Activated CD4-positive, alpha-beta T cell treated with anti-CD3 and anti-CD28 coated beads for 36 hours (primary cell): ENCODE measurements at regions of chr3 and their contacts with region 1.

Region 1: GRCh38 chr3:150763122-150763841 is at the start of gene SIAH2:
- DNase-seq: peak; percentile 96
- ATAC-seq: peak; percentile 72
- H3K4me3 Mint-ChIP-seq: peak within 1 kb of the TSS; percentile 85
- H3K27ac Mint-ChIP-seq: peak within 1 kb of the TSS; percentile 98
- H3K4me1 Mint-ChIP-seq: peaks cover 51% of the 10 kb centered on the region
- H3K27me3 Mint-ChIP-seq: no peaks in the 10 kb centered on the region
- total RNA-seq, gene SIAH2: 85.7 to 154 TPM

Region 2: GRCh38 chr3:149801639-149802038 is 961.6 kb before region 1 on chr3:
- CTCF ChIA-PET with region 1: no interaction called
- POLR2A ChIA-PET with region 1: no interaction called
- intact Hi-C with region 1: no loop called
- DNase-seq: no peak
- ATAC-seq: no peak
- H3K4me3 Mint-ChIP-seq: no peak overlapping the region
- H3K27ac Mint-ChIP-seq: no peak overlapping the region
- H3K4me1 Mint-ChIP-seq: no peaks in the 10 kb centered on the region
- H3K27me3 Mint-ChIP-seq: peaks cover 18% of the 10 kb centered on the region

Region 3: GRCh38 chr3:149812606-149813366 is 950.5 kb before region 1 on chr3 and contains the start of gene RNF13:
- CTCF ChIA-PET with region 1: no interaction called
- POLR2A ChIA-PET with region 1: no interaction called
- intact Hi-C with region 1: loop called in 1 of 2 experiments (anchors 2 kb)
- DNase-seq: peak; percentile 96
- ATAC-seq: peak; percentile 95
- H3K4me3 Mint-ChIP-seq: peak within 1 kb of the TSS; percentile 95
- H3K27ac Mint-ChIP-seq: peak within 1 kb of the TSS; percentile 100
- H3K4me1 Mint-ChIP-seq: peaks cover 46% of the 10 kb centered on the region
- H3K27me3 Mint-ChIP-seq: peaks cover 3% of the 10 kb centered on the region
- total RNA-seq, gene RNF13: 28.8 to 41.2 TPM

Region 4: DNA sequence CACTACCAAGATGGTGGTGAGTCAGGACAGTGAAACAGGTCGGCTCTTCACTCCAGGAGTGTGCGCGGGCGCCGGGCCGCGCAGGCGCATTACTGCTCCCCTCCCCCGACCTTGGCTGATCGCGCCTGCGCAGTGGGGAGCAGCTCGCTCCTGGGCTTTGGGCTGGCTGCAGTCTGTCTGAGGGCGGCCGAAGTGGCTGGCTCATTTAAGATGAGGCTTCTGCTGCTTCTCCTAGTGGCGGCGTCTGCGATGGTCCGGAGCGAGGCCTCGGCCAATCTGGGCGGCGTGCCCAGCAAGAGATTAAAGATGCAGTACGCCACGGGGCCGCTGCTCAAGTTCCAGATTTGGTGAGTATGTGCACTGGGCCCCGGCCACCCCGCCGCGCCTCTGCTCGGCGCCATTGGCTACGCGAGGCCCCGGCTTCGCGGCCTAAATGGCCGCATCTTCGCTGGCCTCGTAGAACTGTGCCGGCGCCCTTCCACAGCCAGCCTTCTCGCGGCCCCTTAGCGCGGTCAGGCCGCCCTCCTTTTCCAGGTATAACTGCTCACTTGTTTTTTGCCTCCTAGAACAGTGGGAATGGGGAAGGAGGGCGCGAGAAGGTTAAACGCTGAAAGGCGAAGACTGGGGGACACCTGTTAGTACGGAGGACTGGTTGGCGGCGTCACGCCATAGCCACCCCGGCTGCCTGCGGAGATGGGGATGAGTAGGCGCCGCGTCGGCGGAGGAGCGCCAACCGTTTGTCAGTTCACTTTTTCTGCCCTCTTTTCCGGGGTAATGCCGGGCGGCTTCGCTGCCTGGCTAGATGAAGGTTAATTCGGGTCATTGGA is 159.9 kb before region 1 on chr3 and contains the start of gene SELENOT:
- CTCF ChIA-PET with region 1: no interaction called
- POLR2A ChIA-PET with region 1: interaction called, 4 read pairs
- intact Hi-C with region 1: loop called (anchors 1 to 2 kb)
- DNase-seq: peak; percentile 96
- ATAC-seq: peak; percentile 91
- H3K4me3 Mint-ChIP-seq: peak within 1 kb of the TSS; percentile 97
- H3K27ac Mint-ChIP-seq: peak within 1 kb of the TSS; percentile 98
- H3K4me1 Mint-ChIP-seq: peaks cover 68% of the 10 kb centered on the region
- H3K27me3 Mint-ChIP-seq: no peaks in the 10 kb centered on the region
- total RNA-seq, gene SELENOT: 88.6 to 134 TPM

Region 5: DNA sequence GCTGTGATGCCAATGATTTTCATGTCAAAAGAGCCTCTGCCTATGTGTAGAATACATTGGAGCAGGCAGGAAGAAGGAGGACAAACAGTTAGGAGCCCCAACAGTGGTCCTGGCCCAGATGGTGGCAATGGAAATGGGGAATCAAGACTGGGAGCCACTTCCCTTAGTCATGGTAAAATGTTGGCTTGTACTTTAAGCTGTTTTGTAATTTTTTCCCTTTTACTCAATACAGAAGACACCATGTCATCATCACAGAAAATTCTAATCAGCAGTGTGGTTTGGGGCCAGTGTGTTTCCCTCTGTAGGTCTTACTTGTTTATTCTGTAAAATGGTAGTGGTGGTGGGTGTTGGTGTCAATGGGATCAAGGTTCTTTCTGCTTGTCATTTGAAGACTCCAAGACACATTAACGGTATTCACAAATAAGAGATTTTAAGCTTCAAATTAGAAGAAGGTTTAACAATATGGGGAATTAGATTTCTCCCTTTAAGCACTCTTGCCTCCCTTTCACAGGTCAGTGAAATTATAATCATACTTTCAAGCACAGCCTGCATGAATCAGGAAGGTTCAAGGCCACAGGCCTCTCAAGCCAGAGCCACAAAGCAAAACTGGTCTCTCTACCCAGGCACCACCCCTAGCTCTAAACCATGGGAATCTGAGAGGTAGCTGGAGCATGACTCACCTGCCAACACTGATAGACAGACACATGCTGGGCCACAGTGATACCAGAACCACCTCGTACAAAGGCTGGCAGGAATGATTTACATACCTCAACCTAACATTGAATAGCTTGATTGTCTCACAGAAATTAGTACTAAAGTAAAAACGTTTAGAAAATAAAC is 25.2 kb before region 1 on chr3:
- CTCF ChIA-PET with region 1: interaction called, 20 read pairs
- POLR2A ChIA-PET with region 1: interaction called, 73 read pairs
- intact Hi-C with region 1: loop called (anchors 1 kb)
- DNase-seq: peak; percentile 77
- ATAC-seq: peak; percentile 73
- H3K4me3 Mint-ChIP-seq: peak overlapping the region; percentile 40
- H3K27ac Mint-ChIP-seq: peak overlapping the region; percentile 93
- H3K4me1 Mint-ChIP-seq: peaks cover 72% of the 10 kb centered on the region
- H3K27me3 Mint-ChIP-seq: no peaks in the 10 kb centered on the region

Region 6: GRCh38 chr3:150787741-150788370 is 24.6 kb after region 1 on chr3:
- CTCF ChIA-PET with region 1: interaction called, 23 read pairs
- POLR2A ChIA-PET with region 1: interaction called, 30 read pairs
- intact Hi-C with region 1: loop called (anchors 1 kb)
- DNase-seq: peak; percentile 94
- ATAC-seq: peak; percentile 50
- H3K4me3 Mint-ChIP-seq: peak overlapping the region; percentile 23
- H3K27ac Mint-ChIP-seq: peak overlapping the region; percentile 55
- H3K4me1 Mint-ChIP-seq: peaks cover 47% of the 10 kb centered on the region
- H3K27me3 Mint-ChIP-seq: peaks cover 10% of the 10 kb centered on the region

Region 7: DNA sequence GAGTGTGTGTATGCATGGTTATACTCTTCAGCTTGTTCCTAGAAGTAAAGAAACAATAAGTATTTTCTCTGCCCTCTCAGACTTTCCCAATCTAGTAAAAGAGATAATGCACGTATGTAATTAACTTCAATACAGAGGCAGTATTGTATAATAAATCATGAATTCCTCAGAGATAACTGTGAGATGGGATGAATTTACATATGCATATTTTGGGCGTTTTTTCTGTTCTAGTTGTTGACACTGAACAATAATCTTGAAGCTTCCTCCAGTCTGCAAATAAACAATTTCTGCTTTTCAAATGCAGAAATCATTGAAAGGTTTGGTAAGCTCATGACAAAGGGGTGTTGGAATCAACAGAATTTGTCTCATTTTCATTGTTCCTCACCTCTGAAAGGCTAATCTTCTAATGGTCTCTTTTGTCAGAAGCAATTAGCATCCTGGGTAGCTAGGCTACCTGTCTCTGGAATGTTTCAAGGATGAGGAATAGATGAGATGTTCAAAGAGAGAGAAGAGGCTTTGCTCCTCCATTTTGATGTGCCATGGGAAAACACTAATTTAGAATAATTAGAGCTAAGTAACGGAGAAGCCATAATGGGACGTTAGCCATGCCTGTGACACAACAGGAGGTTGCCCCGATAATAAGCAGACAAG is 43.0 kb after region 1 on chr3:
- CTCF ChIA-PET with region 1: no interaction called
- POLR2A ChIA-PET with region 1: no interaction called
- intact Hi-C with region 1: no loop called
- DNase-seq: no peak
- ATAC-seq: no peak
- H3K4me3 Mint-ChIP-seq: no peak overlapping the region
- H3K27ac Mint-ChIP-seq: no peak overlapping the region
- H3K4me1 Mint-ChIP-seq: no peaks in the 10 kb centered on the region
- H3K27me3 Mint-ChIP-seq: peaks cover 7% of the 10 kb centered on the region

Region 8: DNA sequence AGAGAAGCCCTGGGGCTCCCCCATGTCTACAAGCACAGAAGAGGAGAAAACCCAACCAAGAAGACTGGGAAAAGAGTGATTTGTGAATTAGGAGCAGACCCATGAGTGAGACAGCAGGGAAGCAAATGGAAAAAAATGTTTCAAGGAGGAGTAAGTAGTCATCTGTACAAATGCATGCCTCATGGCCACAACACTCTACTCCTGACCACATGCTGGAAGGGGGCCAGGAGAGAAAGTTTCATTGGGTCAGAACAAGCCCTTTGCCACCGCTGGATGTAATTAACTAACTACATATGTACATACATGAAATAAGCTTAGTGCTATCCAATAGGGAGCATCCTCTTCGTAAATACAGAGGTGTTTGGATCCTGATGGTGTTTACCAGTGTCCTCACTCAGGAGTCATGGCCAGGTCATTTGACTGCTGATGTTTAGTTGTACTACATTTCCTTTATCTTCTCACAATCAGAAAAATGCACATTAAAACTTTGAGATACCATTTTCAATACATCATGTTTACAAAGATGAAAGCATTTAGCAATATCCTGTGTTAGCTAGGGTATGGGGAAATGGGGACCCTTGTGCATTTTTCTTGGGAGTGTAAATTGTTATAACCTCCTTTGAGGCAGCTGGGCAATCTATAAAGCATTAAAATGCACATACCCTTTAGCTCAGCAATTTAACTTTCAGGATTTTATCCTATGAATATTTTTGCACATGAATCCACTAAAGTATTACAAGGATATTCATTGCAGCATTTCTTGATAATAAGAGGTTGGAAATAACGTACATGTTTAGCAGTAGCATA is 182.1 kb after region 1 on chr3:
- CTCF ChIA-PET with region 1: no interaction called
- POLR2A ChIA-PET with region 1: no interaction called
- intact Hi-C with region 1: no loop called
- DNase-seq: no peak
- ATAC-seq: no peak
- H3K4me3 Mint-ChIP-seq: no peak overlapping the region
- H3K27ac Mint-ChIP-seq: no peak overlapping the region
- H3K4me1 Mint-ChIP-seq: no peaks in the 10 kb centered on the region
- H3K27me3 Mint-ChIP-seq: peaks cover 27% of the 10 kb centered on the region

Region 9: DNA sequence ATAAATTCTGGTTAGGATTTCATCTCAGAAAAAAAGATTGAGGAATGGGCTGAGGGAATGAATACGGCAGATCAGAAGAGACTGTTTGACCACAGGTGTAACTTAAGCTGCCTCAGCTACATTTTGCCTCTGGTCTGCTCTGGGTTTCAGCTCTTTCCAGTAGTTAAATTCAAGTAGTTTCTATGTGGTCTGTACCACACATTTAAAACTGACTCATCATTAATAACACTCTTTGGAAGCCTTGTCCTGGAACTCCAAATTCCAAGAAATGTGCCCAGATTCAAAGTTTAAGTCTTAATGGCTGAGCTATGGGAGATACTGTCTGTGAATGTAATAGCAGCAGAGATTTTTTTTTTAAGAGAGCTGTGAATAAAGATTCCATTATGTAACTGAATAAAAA is 830.6 kb after region 1 on chr3:
- CTCF ChIA-PET with region 1: no interaction called
- POLR2A ChIA-PET with region 1: no interaction called
- intact Hi-C with region 1: no loop called
- DNase-seq: no peak
- ATAC-seq: no peak
- H3K4me3 Mint-ChIP-seq: no peak overlapping the region
- H3K27ac Mint-ChIP-seq: no peak overlapping the region
- H3K4me1 Mint-ChIP-seq: no peaks in the 10 kb centered on the region
- H3K27me3 Mint-ChIP-seq: peaks cover 5% of the 10 kb centered on the region

Region 10: GRCh38 chr3:152258448-152259393 is 1495.4 kb after region 1 on chr3:
- CTCF ChIA-PET with region 1: no interaction called
- POLR2A ChIA-PET with region 1: no interaction called
- intact Hi-C with region 1: loop called in 1 of 2 experiments (anchors 10 kb)
- DNase-seq: peak; percentile 82
- ATAC-seq: peak; percentile 81
- H3K4me3 Mint-ChIP-seq: peak overlapping the region; percentile 61
- H3K27ac Mint-ChIP-seq: peak overlapping the region; percentile 91
- H3K4me1 Mint-ChIP-seq: peaks cover 90% of the 10 kb centered on the region
- H3K27me3 Mint-ChIP-seq: no peaks in the 10 kb centered on the region